Breast epithelium (tissue), 4 donors: ENCODE measurements at regions of chr10 and their contacts with region 1.

Region 1: DNA sequence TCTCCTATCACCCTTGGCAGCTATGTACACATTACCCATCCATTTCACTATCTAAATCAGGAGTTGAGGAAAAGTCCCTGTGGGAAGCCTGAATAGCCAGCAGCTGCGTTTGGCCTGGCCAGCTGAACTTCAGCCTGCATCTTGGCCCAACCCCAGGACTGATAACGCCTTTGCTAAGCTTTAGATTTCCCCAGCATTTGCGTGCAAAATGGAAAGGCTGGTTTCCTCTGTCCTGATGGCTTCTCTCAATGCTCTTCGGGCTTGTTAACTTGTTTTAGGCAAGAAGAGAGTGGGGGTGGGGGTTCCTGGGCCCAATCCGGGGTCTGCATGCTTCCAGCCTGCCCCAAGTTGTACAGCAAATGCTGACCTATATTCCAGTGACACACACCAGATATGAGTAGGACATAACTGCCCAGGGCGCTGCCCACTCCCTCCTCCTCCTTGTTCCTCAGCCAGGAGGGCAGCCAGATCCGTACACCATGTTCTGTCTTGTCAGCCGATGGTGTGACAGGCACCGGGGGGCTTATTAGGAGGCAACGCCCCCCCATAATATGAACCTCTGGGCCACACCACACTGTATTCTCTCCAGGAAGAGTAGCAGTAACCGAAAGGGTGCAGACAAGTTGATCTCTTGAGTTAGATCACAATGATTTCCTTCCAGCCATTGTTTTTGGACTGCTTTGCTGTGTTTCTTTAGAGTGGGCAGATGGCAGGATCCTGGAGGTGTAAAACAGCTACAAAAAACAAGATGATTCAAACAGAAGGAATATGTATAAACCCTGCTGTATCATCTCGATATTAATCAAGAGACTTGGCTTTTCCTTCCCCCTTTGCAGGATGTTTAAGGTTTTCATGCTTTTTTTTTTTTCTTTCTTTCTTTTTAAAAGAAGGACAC is 339.0 kb downstream of the RNLS start:
- DNase-seq: no peak
- H3K4me3 ChIP-seq: peak overlapping the region in 1 of 3 donors; percentile 31
- H3K27ac ChIP-seq: peak overlapping the region; percentile 71 to 84
- H3K4me1 ChIP-seq: no peaks in the 10 kb centered on the region
- H3K27me3 ChIP-seq: no peaks in the 10 kb centered on the region
- CTCF ChIP-seq: no peak
- POLR2A ChIP-seq: no peak

Region 2: DNA sequence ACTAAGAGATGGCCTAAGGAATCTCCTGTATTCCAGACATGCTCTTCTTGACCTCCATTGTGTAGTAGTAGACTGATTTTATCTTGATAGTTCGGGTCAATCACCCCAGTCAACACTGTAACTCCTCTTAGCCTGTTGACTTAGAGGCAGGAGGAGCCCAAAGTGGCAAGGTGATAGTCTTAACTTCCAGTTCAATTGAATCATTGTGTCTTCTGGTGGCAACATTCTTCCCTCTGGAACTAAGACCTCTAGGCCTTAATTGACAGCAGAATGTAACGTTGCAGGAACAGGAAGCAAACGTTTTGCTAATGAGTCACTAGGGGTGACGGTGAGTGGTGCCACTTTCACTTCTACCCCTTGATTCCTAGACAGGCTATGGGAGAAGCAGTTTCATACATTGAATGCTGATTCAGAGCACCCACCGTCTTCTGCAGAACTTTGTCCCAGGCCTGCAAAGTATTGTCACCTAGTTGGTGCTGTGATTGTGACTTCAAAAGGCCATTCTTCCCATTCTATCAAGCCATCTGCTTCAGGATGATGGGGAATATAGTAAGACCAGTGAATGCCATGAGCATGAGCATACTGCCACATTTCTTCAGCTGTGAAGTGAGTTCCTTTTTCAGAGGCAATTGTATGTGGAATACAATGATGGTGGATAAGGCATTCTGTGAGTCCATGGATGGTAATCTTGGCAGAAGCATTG is 608.3 kb before region 1 on chr10:
- intact Hi-C with region 1: no loop called
- DNase-seq: no peak
- H3K4me3 ChIP-seq: no peak overlapping the region
- H3K27ac ChIP-seq: no peak overlapping the region
- H3K4me1 ChIP-seq: no peaks in the 10 kb centered on the region
- H3K27me3 ChIP-seq: no peaks in the 10 kb centered on the region
- CTCF ChIP-seq: no peak
- POLR2A ChIP-seq: no peak

Region 3: GRCh38 chr10:88254091-88254490 is 10.0 kb after region 1 on chr10:
- intact Hi-C with region 1: loop called (anchors 1 kb)
- DNase-seq: no peak
- H3K4me3 ChIP-seq: no peak overlapping the region
- H3K27ac ChIP-seq: peak overlapping the region; percentile 36 to 72
- H3K4me1 ChIP-seq: peaks cover 0 to 7% of the 10 kb centered on the region in 2 donors
- H3K27me3 ChIP-seq: no peaks in the 10 kb centered on the region
- CTCF ChIP-seq: no peak
- POLR2A ChIP-seq: no peak